Transverse colon (tissue), 4 donors: ENCODE measurements at regions of chr16 and their contacts with region 1.

Region 1: DNA sequence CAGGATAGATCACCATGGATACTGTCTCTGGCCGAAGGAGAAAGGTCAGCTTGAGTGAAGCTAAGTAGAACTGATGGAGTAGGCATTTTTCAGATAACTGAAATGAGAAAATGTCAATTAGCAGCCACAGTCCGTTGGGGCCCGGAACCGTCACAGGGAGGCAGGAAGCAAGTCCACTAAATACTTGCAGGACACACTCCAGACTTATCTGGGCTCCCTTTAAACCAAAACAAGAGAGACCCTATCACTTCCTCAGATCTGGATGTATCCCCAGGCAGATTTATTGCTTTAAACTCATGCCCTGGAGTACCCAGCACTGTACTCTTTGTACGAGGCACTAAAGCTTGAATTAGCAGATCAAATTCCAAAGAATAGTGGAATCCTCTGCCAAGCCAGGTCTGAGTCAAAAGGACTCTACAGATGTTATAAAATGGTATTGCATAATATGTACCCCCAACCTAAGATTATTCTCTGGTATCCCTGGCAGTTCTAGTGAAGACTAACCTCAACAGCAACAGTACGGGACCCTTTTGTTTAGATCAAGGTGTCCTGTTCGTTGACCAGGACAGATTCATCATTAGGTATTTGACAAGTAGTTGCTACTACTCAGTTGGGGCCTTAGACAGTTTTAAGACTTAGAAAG is 8.1 kb downstream of the ZP2 start:
- DNase-seq: no peak
- H3K4me3 ChIP-seq: no peak overlapping the region
- H3K27ac ChIP-seq: peak overlapping the region in 2 of 4 donors; percentile 1 to 3
- H3K4me1 ChIP-seq: peaks cover 0 to 29% (median 12%) of the 10 kb centered on the region in 4 donors
- H3K27me3 ChIP-seq: no peaks in the 10 kb centered on the region
- CTCF ChIP-seq: no peak
- EP300 ChIP-seq: no peak
- POLR2A ChIP-seq: no peak

Region 2: GRCh38 chr16:21184834-21185233 is 18.4 kb before region 1 on chr16:
- in situ Hi-C with region 1: no loop called
- intact Hi-C with region 1: no loop called
- DNase-seq: no peak
- H3K4me3 ChIP-seq: no peak overlapping the region
- H3K27ac ChIP-seq: no peak overlapping the region
- H3K4me1 ChIP-seq: peaks cover 3 to 11% (median 6%) of the 10 kb centered on the region in 4 donors
- H3K27me3 ChIP-seq: no peaks in the 10 kb centered on the region
- CTCF ChIP-seq: no peak
- EP300 ChIP-seq: no peak
- POLR2A ChIP-seq: no peak

Region 3: GRCh38 chr16:21263640-21264570 is 60.6 kb after region 1 on chr16:
- in situ Hi-C with region 1: no loop called
- intact Hi-C with region 1: loop called (anchors 10 kb)
- DNase-seq: peak; percentile 43
- H3K4me3 ChIP-seq: no peak overlapping the region
- H3K27ac ChIP-seq: peak overlapping the region; percentile 38 to 64 (median 58)
- H3K4me1 ChIP-seq: peaks cover 9 to 46% (median 27%) of the 10 kb centered on the region in 4 donors
- H3K27me3 ChIP-seq: no peaks in the 10 kb centered on the region
- CTCF ChIP-seq: no peak
- EP300 ChIP-seq: no peak
- POLR2A ChIP-seq: no peak